ENCODE measurements at regions of chr10 and their contacts with region 1.

Region 1: DNA sequence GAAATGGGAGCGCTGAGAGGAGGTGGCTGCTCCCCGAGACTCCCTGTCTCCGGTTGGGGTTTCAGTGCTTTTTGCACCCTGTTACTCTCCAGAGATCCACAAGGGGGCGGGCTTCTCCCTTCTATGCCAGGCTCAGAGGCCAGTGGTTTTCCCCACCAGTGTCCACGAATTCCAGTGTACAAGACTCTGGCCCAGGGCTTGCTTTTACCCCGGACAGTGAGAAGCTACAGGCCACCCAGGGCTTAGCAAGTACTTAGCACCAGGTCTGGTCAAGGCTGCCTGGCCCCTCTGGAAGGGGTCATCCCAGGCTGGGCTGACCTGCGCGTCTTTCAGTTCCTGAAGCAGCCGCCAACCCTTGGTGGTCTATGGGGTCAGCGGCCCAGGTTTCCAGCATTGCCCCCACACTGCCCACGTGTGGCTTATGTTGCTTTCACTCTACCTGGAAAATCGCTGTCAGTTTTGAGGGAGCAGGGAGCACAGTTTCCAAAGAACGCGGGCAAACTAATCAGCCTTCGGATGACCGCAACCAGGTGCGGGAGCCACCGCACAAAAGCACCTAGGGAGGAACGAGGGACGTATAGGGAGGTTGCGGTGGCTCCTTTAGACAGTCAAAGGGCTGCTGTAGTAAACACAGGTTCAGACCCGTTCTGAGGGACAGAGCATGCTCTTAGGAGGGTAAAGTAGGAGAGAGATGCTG is 6.8 kb downstream of the CYP26A1 start:
- DNase-seq: peak in 7 of 10 donors; percentile 16 to 73 (median 56)
- H3K4me3 ChIP-seq: peak overlapping the region in 3 of 59 donors; percentile 9 to 37 (median 15)
- H3K27ac ChIP-seq: no peak overlapping the region
- H3K27me3 ChIP-seq: peaks cover 0 to 46% (median 15%) of the 10 kb centered on the region in 45 donors
- CTCF ChIP-seq: peak; percentile 44 to 91 (median 82)

Region 2: DNA sequence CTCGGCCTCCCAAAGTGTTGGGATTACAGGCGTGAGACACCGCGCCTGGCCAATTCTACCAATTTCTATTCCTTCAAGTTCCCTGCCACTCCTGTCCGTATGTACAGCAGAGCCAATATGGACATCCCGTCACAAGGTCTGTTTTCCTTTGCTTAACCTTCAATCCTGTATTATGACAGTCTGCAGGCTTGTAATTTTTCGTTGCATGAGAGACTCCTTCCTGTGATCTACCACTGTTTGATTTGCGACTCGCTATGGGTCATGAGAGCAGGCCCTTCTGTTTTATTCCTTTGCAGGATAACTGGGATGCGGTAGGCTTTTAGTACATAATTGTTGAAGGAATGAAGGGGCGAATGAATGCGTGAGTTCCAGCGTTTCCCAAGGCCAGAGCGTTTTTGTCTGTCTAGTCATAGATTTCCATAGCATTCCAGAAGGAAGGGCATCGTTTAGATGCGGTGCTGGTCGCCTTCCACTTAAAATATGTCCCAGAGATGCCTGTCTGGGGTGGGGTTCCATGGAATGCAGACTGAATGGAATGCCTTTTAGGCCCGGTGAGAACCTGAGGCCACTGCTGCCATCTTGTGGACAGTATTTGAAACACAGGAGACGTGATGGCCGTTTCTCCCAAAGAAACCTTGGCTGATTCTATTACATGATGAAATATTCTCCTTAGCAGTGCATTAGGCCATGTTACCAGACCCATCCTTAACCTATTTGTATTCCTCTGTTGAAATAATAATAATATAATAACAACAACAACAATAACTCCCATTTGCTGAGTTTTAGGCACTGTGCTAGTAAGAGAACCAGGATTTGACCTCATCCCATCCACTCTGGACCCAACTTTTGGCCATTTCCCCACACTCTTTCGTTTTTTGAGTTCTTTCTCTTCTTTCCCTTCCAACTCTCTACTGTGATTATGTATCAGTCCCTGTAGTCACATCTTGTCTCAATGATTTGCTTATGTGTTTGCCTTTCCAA is 208.4 kb after region 1 on chr10:
- intact Hi-C with region 1: loop called (anchors 2 to 5 kb)
- DNase-seq: peak in 8 of 10 donors; percentile 38 to 79 (median 63)
- H3K4me3 ChIP-seq: no peak overlapping the region
- H3K27ac ChIP-seq: no peak overlapping the region
- H3K27me3 ChIP-seq: no peaks in the 10 kb centered on the region
- CTCF ChIP-seq: peak; percentile 59 to 91 (median 83)

Region 3: GRCh38 chr10:93352638-93353383 is 272.3 kb after region 1 on chr10:
- intact Hi-C with region 1: loop called in 1 of 2 experiments (anchors 2 kb)
- DNase-seq: no peak
- H3K4me3 ChIP-seq: peak overlapping the region in 1 of 59 donors; percentile 28
- H3K27ac ChIP-seq: no peak overlapping the region
- H3K27me3 ChIP-seq: peaks cover 0 to 19% (median 0%) of the 10 kb centered on the region in 45 donors
- CTCF ChIP-seq: peak; percentile 66 to 93 (median 80)